PC-3 (cell line): ENCODE measurements at regions of chr14 and their contacts with region 1.

Region 1: DNA sequence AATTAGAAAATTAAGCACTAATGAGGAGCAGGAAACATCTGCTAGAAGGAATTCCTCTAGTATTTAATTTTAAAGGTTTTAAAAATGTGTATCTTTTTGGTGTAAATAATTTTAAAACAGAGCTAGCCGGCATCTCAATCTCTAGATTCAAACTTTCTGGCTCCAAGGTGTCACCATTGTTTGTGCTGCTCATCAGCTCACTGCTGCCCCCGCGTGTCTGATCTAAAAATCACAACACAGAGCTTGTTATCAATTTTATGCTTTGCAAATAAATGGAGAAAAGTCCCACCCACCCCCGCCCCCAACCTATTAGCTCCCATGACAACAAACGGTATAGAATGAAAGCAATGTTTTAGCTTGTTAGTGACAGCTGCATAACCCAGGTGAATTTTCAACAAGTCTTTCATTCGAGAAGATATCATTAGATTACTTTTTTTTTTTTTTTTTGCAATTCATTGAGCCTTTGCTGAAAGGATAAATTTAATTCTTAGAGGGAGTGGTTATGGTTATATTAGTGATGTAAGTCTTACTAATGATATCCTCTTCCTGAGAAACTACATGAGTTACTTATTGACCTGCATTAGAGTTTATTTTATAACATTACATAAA is 11.3 kb upstream of the ABHD12B start:
- DNase-seq: peak; percentile 96
- ATAC-seq: peak; percentile 66
- H3K4me3 ChIP-seq: peak overlapping the region; percentile 82
- H3K27ac ChIP-seq: peak overlapping the region; percentile 34
- H3K4me1 ChIP-seq: peaks cover 13% of the 10 kb centered on the region
- H3K27me3 ChIP-seq: no peaks in the 10 kb centered on the region
- CTCF ChIP-seq: peak; percentile 72; the same call in 1 of the 2 replicates

Region 2: GRCh38 chr14:50542941-50543418 is 317.6 kb before region 1 on chr14:
- CTCF ChIA-PET with region 1: interaction called, 11 read pairs
- POLR2A ChIA-PET with region 1: no interaction called
- intact Hi-C with region 1: loop called (anchors 1 kb)
- DNase-seq: peak; percentile 87
- ATAC-seq: peak; percentile 82
- H3K4me3 ChIP-seq: no peak overlapping the region
- H3K27ac ChIP-seq: no peak overlapping the region
- H3K4me1 ChIP-seq: peaks cover 16% of the 10 kb centered on the region
- H3K27me3 ChIP-seq: no peaks in the 10 kb centered on the region
- CTCF ChIP-seq: peak; percentile 91

Region 3: GRCh38 chr14:50619556-50620141 is 240.9 kb before region 1 on chr14:
- CTCF ChIA-PET with region 1: interaction called, 9 read pairs
- POLR2A ChIA-PET with region 1: no interaction called
- intact Hi-C with region 1: loop called (anchors 1 kb)
- DNase-seq: peak; percentile 72
- ATAC-seq: peak; percentile 93
- H3K4me3 ChIP-seq: no peak overlapping the region
- H3K27ac ChIP-seq: no peak overlapping the region
- H3K4me1 ChIP-seq: peaks cover 8% of the 10 kb centered on the region
- H3K27me3 ChIP-seq: no peaks in the 10 kb centered on the region
- CTCF ChIP-seq: peak; percentile 89

Region 4: GRCh38 chr14:50726372-50727107 is 134.0 kb before region 1 on chr14:
- CTCF ChIA-PET with region 1: no interaction called
- POLR2A ChIA-PET with region 1: no interaction called
- intact Hi-C with region 1: loop called (anchors 5 kb)
- DNase-seq: peak; percentile 77
- ATAC-seq: peak; percentile 91
- H3K4me3 ChIP-seq: no peak overlapping the region
- H3K27ac ChIP-seq: peak overlapping the region; percentile 48
- H3K4me1 ChIP-seq: peaks cover 21% of the 10 kb centered on the region
- H3K27me3 ChIP-seq: no peaks in the 10 kb centered on the region
- CTCF ChIP-seq: no peak

Region 5: DNA sequence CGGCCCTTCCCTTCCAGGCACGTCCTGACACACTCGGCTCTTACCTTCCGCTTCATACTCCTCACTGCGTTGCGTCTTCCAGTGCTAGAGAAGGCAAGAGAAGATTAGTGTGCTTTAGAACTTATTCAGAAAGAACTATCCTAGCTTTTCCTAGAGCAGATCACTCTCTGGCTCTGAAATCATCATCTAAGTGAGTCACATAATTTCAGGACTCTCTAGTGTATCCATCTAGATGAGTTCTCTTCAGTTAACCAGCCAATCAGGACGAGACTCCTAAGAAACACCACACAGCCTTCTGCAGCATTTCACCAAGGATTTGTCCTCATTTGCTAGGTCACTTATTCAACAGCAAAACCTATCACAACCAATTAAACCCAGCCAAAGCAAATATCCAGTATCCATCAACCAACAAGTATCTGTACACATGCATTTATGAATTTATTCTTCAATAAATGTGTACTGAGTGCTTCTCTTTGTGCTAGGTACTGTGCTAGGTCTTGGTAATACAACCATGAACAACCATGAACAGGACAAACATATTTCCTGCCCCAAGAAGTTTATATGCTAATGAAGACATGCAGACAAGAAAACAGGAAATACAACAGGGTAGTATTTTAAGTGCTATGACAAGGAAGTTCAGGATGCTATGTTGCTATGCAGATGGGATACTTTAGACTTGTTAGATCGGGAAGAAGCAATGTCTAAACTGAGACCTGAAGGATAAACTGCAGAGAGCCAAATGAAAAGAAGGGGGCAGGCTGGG is 81.7 kb before region 1 on chr14:
- CTCF ChIA-PET with region 1: interaction called, 84 read pairs
- POLR2A ChIA-PET with region 1: interaction called, 13 read pairs
- intact Hi-C with region 1: loop called (anchors 1 kb)
- DNase-seq: no peak
- ATAC-seq: peak; percentile 6; the same call in 1 of the 2 replicates
- H3K4me3 ChIP-seq: no peak overlapping the region
- H3K27ac ChIP-seq: no peak overlapping the region
- H3K4me1 ChIP-seq: peaks cover 37% of the 10 kb centered on the region
- H3K27me3 ChIP-seq: no peaks in the 10 kb centered on the region
- CTCF ChIP-seq: no peak

Region 6: DNA sequence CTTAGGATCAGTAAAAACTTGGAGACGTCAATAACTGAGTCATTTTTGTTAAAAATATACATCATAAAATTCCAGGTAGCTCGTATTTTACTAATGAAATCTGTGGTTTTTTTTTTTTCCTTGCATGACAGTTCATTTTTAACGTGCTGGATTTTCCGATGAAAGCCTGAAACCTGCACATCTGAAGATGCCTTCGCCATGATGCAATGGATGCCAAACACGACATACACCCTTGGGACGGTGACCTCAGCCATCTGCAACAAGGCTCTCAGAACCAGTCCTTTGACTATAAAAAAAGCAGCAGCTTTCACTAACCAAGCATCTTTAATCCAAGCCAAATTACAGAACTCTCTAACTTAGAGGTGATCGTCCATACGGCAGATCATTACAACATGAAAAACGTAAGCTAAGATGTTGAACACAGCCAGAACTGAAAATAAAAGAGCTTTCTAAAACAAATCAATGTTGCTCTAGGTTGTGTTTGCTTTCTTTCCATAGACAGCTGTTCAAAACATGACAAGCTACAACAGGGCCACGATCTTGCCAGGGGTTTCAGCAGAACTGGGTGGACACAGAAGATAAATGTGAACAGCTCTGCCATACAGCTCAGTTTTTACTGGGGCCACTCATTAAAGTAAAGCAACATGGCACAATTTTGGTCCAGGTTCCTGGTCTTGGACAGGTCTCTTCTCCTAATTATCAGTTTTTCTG is 37.4 kb before region 1 on chr14:
- CTCF ChIA-PET with region 1: interaction called, 13 read pairs
- POLR2A ChIA-PET with region 1: interaction called, 7 read pairs
- intact Hi-C with region 1: loop called (anchors 1 kb)
- DNase-seq: peak; percentile 25
- ATAC-seq: peak; percentile 18
- H3K4me3 ChIP-seq: no peak overlapping the region
- H3K27ac ChIP-seq: peak overlapping the region; percentile 58
- H3K4me1 ChIP-seq: peaks cover 20% of the 10 kb centered on the region
- H3K27me3 ChIP-seq: no peaks in the 10 kb centered on the region
- CTCF ChIP-seq: no peak

Region 7: DNA sequence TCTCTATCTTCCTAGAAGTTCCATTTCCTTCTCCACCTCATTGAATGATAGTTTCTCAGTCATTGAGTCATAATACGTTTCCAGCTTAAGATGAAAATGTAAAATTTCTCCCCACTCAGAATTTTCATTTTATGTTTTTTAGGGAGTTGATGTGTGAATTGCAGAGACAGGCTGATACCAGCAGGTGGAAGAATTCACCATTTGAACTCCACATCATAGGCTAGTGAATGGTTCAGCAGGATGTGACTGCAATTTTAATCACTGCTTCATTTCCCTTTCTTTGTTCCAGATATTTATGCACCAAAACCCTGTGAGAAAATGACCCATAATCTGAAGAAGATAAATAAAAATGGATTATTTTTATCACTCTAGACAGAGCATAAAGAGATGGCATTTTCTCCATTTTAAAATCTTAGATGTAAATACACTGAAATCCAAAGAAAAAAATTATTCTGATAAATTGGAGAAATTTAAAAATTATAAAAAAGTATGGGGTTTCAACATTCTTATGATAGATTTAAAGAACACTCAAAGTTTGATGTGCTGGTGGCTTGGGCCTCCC is 94.3 kb after region 1 on chr14:
- CTCF ChIA-PET with region 1: interaction called, 10 read pairs
- POLR2A ChIA-PET with region 1: no interaction called
- intact Hi-C with region 1: no loop called
- DNase-seq: peak; percentile 82
- ATAC-seq: peak; percentile 69
- H3K4me3 ChIP-seq: peak overlapping the region; percentile 20; the same call in 1 of the 2 replicates
- H3K27ac ChIP-seq: peak overlapping the region; percentile 89
- H3K4me1 ChIP-seq: peaks cover 19% of the 10 kb centered on the region
- H3K27me3 ChIP-seq: no peaks in the 10 kb centered on the region
- CTCF ChIP-seq: peak; percentile 91

Region 8: GRCh38 chr14:50967790-50968189 is 107.2 kb after region 1 on chr14:
- CTCF ChIA-PET with region 1: no interaction called
- POLR2A ChIA-PET with region 1: no interaction called
- intact Hi-C with region 1: no loop called
- DNase-seq: no peak
- ATAC-seq: no peak
- H3K4me3 ChIP-seq: no peak overlapping the region
- H3K27ac ChIP-seq: no peak overlapping the region
- H3K4me1 ChIP-seq: peaks cover 17% of the 10 kb centered on the region
- H3K27me3 ChIP-seq: no peaks in the 10 kb centered on the region
- CTCF ChIP-seq: no peak

Region 9: DNA sequence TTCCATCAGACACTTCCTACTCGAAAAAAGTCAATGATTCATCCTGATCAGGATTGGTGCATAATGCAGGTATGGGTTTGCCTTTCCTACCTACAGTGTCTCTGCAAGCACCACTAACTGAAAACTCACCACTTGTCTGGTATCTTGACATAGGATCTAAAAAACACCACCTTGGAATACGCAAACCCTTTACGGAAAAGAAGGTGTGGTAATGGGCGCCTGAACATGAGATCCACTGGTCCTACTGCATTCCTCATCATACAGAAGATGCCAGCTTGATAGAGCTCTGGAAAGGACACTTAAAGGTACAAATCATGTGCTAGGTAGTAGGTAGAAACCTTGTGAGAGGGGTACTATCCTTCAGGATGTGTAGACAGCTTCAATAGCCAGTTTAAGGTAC is 334.7 kb after region 1 on chr14:
- CTCF ChIA-PET with region 1: no interaction called
- POLR2A ChIA-PET with region 1: no interaction called
- intact Hi-C with region 1: no loop called
- DNase-seq: no peak
- ATAC-seq: no peak
- H3K4me3 ChIP-seq: no peak overlapping the region
- H3K27ac ChIP-seq: no peak overlapping the region
- H3K4me1 ChIP-seq: peaks cover 2% of the 10 kb centered on the region
- H3K27me3 ChIP-seq: no peaks in the 10 kb centered on the region
- CTCF ChIP-seq: no peak